MCF 10A (cell line): ENCODE measurements at regions of chr5 and their contacts with region 1.

Region 1: GRCh38 chr5:154647114-154647760 is 107.9 kb upstream of the LARP1 start:
- DNase-seq: no peak
- H3K4me3 Mint-ChIP-seq: no peak overlapping the region
- H3K27ac Mint-ChIP-seq: no peak overlapping the region
- H3K4me1 Mint-ChIP-seq: no peaks in the 10 kb centered on the region
- H3K27me3 Mint-ChIP-seq: no peaks in the 10 kb centered on the region
- CTCF ChIP-seq: no peak

Region 2: GRCh38 chr5:154627698-154628678 is 19.2 kb before region 1 on chr5:
- CTCF ChIA-PET with region 1: interaction called, 11 read pairs
- POLR2A ChIA-PET with region 1: no interaction called
- intact Hi-C with region 1: no loop called
- DNase-seq: peak; percentile 62
- H3K4me3 Mint-ChIP-seq: no peak overlapping the region
- H3K27ac Mint-ChIP-seq: no peak overlapping the region
- H3K4me1 Mint-ChIP-seq: no peaks in the 10 kb centered on the region
- H3K27me3 Mint-ChIP-seq: no peaks in the 10 kb centered on the region
- CTCF ChIP-seq: no peak

Region 3: DNA sequence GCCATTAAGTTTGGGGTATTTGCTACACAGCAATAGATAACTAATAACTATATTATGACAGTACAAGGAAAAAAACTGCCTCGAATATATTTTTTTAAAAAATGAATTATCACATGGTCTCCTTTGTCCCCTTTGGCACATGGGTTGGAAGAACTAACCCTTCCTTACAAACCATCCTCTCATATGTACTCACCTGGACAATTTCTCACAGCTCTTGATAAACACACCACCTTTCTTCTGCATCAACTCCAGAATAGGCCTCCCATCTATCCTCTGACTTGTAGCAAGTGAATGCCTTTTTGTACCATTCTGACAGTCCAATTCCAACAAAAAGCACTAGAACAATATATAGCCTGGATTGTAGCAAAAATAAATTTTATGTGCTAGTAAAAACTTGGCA is 29.3 kb after region 1 on chr5:
- CTCF ChIA-PET with region 1: interaction called, 12 read pairs
- POLR2A ChIA-PET with region 1: interaction called, 4 read pairs
- intact Hi-C with region 1: no loop called
- DNase-seq: no peak
- H3K4me3 Mint-ChIP-seq: no peak overlapping the region
- H3K27ac Mint-ChIP-seq: no peak overlapping the region
- H3K4me1 Mint-ChIP-seq: no peaks in the 10 kb centered on the region
- H3K27me3 Mint-ChIP-seq: no peaks in the 10 kb centered on the region
- CTCF ChIP-seq: no peak

Region 4: GRCh38 chr5:154801083-154801482 is 153.8 kb after region 1 on chr5:
- CTCF ChIA-PET with region 1: interaction called, 10 read pairs
- POLR2A ChIA-PET with region 1: interaction called, 3 read pairs
- intact Hi-C with region 1: no loop called
- DNase-seq: no peak
- H3K4me3 Mint-ChIP-seq: no peak overlapping the region
- H3K27ac Mint-ChIP-seq: no peak overlapping the region
- H3K4me1 Mint-ChIP-seq: no peaks in the 10 kb centered on the region
- H3K27me3 Mint-ChIP-seq: no peaks in the 10 kb centered on the region
- CTCF ChIP-seq: no peak

Region 5: DNA sequence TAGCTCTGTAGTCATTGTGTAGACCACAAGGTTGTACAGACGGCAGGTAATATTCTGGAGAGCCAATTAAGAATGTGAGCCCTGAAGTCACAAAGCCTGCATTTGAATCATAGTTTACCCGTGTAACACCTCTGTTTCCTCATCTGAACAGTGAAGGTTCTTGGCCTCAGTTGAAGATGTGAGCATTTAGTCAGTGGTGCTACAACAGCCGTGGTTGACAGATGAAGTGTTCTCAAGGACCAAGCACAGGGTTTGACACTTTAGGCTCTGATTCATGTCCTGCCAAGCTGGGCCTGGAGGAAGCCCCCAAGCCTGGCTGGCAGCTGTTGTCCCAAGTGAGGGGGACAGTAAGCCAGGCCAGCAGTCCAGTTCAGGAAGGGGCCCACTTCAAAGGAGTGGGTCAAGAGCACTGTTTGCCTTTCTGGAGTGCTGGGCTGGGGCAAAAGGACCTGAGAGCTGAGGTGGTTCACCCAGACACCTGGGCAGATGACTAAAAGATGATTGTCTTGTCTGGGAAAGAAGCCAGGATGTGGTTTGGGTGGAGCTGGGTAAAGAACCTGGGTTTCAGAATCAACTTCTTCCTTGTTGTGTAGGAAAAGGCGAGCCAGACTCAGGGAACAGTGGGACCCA is 182.5 kb after region 1 on chr5:
- CTCF ChIA-PET with region 1: interaction called, 21 read pairs
- POLR2A ChIA-PET with region 1: interaction called, 8 read pairs
- intact Hi-C with region 1: no loop called
- DNase-seq: peak; percentile 98
- H3K4me3 Mint-ChIP-seq: peak overlapping the region; percentile 14
- H3K27ac Mint-ChIP-seq: peak overlapping the region; percentile 87
- H3K4me1 Mint-ChIP-seq: peaks cover 54% of the 10 kb centered on the region
- H3K27me3 Mint-ChIP-seq: no peaks in the 10 kb centered on the region
- CTCF ChIP-seq: no peak

Region 6: GRCh38 chr5:155004138-155004744 is 357.0 kb after region 1 on chr5:
- CTCF ChIA-PET with region 1: no interaction called
- POLR2A ChIA-PET with region 1: no interaction called
- intact Hi-C with region 1: loop called (anchors 1 kb)
- DNase-seq: peak; percentile 61
- H3K4me3 Mint-ChIP-seq: no peak overlapping the region
- H3K27ac Mint-ChIP-seq: no peak overlapping the region
- H3K4me1 Mint-ChIP-seq: peaks cover 9% of the 10 kb centered on the region
- H3K27me3 Mint-ChIP-seq: no peaks in the 10 kb centered on the region
- CTCF ChIP-seq: peak; percentile 37